BJ (cell line): ENCODE measurements at regions of chr5 and their contacts with region 1.

Region 1: DNA sequence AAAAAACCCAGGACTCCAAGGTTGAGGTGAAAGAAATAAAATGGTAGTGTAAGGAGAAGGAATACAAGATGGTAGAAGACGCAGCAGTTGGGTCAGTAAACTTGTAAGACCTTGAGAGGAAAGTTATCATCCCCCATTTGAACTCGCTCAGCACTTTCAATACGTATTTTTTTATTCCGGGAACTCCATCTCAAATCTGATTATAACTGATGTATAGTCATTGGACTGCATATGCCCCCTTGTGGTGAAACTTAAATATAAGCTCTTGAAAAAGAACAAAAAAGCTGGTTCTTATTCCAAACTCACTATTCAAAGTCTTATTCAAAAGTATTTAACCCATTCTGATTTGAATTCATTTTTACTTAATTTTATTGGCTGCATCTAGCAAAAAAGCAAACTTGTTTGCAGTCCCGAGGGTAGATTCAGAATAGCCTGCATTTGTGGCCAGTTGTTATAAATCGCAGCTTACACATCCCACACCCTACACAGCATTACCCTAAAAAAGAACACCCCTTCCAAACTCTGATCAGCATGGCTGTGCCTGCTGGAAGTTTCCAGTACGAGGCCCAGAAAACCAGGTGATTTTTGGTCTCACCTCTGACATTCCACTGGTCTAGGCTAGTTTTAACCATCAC is 118.0 kb downstream of the ESM1 start:
- DNase-seq: no peak
- H3K4me3 ChIP-seq: no peak overlapping the region
- H3K27me3 ChIP-seq: peaks cover 2% of the 10 kb centered on the region; the same call in 1 of the 2 replicates
- CTCF ChIP-seq: peak; percentile 55

Region 2: GRCh38 chr5:54889826-54890225 is 22.4 kb after region 1 on chr5:
- CTCF ChIA-PET with region 1: interaction called, 13 read pairs
- POLR2A ChIA-PET with region 1: no interaction called
- DNase-seq: peak; percentile 48
- H3K4me3 ChIP-seq: no peak overlapping the region
- H3K27me3 ChIP-seq: peaks cover 2% of the 10 kb centered on the region
- CTCF ChIP-seq: no peak

Region 3: DNA sequence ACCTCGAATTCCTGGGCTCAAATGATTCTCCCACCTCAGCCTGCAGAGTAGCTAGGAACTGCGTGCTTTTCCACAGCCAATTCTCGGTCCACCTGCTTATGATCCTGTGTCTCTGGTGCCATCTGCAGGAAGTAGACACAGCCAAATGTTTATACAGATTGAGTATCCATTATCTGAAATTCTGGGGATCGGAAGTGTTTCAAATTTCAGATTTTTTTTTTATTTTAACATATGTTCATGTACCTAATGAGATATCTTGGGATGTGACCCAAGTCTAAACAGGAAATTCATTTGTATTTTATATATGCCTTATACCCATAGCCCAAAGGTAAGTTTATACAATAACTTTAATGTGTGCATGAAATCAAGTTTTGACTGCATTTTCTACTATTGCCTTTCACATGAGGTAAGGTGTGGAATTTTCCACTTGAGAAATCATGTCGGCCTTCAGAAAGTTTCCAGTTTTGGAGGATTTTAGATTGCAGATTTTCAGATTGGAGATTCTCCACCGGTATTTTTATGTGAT is 28.5 kb after region 1 on chr5:
- CTCF ChIA-PET with region 1: interaction called, 13 read pairs
- POLR2A ChIA-PET with region 1: no interaction called
- DNase-seq: no peak
- H3K4me3 ChIP-seq: no peak overlapping the region
- H3K27me3 ChIP-seq: peaks cover 2% of the 10 kb centered on the region; the same call in 1 of the 2 replicates
- CTCF ChIP-seq: peak; percentile 72

Region 4: GRCh38 chr5:54981928-54982327 is 114.5 kb after region 1 on chr5:
- CTCF ChIA-PET with region 1: no interaction called
- POLR2A ChIA-PET with region 1: no interaction called
- DNase-seq: no peak
- H3K4me3 ChIP-seq: no peak overlapping the region
- H3K27me3 ChIP-seq: no peaks in the 10 kb centered on the region
- CTCF ChIP-seq: no peak